ENCODE measurements at regions of chr2 and their contacts with region 1.

Region 1: DNA sequence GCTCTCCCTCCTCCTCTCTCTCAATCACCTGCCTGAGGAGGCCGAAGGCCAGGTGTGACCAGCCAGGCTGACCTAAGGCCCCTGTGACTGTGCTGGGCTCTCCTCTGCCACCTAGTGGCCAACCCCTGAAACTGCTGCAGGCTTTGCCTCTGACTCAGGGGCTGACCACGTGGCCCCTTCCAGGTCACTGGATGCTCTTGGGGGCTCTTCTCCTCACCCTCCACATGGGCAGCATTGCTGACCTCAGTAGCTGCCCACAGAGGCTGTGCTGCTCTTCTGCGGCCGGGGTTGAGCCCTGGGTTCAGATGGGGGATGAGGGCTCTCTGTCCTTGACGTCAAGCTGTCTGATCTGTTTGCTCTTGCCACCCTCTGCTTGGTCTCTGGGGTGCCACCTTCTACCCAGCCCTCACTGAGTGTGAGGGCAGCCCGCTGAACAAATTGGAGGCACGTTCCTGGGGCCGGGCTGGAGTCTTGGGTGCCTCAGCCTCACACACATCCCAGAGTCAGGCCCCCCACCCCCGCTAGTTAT is 122.7 kb downstream of the TWIST2 start:
- DNase-seq: peak; percentile 74
- ATAC-seq: peak; percentile 54
- H3K4me3 ChIP-seq: no peak overlapping the region
- H3K27ac ChIP-seq: no peak overlapping the region
- H3K4me1 ChIP-seq: peaks cover 24% of the 10 kb centered on the region
- H3K27me3 ChIP-seq: no peaks in the 10 kb centered on the region
- CTCF ChIP-seq: peak; percentile 95

Region 2: GRCh38 chr2:237627441-237628246 is 1343.0 kb before region 1 on chr2 and contains the start of gene LRRFIP1:
- CTCF ChIA-PET with region 1: no interaction called
- POLR2A ChIA-PET with region 1: no interaction called
- intact Hi-C with region 1: no loop called
- DNase-seq: peak; percentile 31
- ATAC-seq: peak; percentile 82
- H3K4me3 ChIP-seq: peak within 1 kb of the TSS; percentile 84
- H3K27ac ChIP-seq: no peak within 1 kb of the TSS
- H3K4me1 ChIP-seq: peaks cover 10% of the 10 kb centered on the region; the same call in 1 of the 2 replicates
- H3K27me3 ChIP-seq: peaks cover 4% of the 10 kb centered on the region; the same call in 1 of the 2 replicates
- CTCF ChIP-seq: no peak
- total RNA-seq, gene LRRFIP1: 87.8 and 106 TPM in 2 replicates

Region 3: GRCh38 chr2:238720232-238720672 is 250.4 kb before region 1 on chr2:
- CTCF ChIA-PET with region 1: no interaction called
- POLR2A ChIA-PET with region 1: no interaction called
- intact Hi-C with region 1: loop called (anchors 10 kb)
- DNase-seq: peak; percentile 71
- ATAC-seq: peak; percentile 76
- H3K4me3 ChIP-seq: no peak overlapping the region
- H3K27ac ChIP-seq: no peak overlapping the region
- H3K4me1 ChIP-seq: no peaks in the 10 kb centered on the region
- H3K27me3 ChIP-seq: no peaks in the 10 kb centered on the region
- CTCF ChIP-seq: peak; percentile 82

Region 4: GRCh38 chr2:238895891-238896600 is 74.6 kb before region 1 on chr2:
- CTCF ChIA-PET with region 1: no interaction called
- POLR2A ChIA-PET with region 1: no interaction called
- intact Hi-C with region 1: no loop called
- DNase-seq: no peak
- ATAC-seq: no peak
- H3K4me3 ChIP-seq: no peak overlapping the region
- H3K27ac ChIP-seq: no peak overlapping the region
- H3K4me1 ChIP-seq: no peaks in the 10 kb centered on the region
- H3K27me3 ChIP-seq: no peaks in the 10 kb centered on the region
- CTCF ChIP-seq: no peak

Region 5: GRCh38 chr2:238945433-238946150 is 25.0 kb before region 1 on chr2:
- CTCF ChIA-PET with region 1: interaction called, 6 read pairs
- POLR2A ChIA-PET with region 1: interaction called, 3 read pairs
- intact Hi-C with region 1: loop called (anchors 1 kb)
- DNase-seq: peak; percentile 45
- ATAC-seq: no peak
- H3K4me3 ChIP-seq: no peak overlapping the region
- H3K27ac ChIP-seq: no peak overlapping the region
- H3K4me1 ChIP-seq: peaks cover 50% of the 10 kb centered on the region
- H3K27me3 ChIP-seq: no peaks in the 10 kb centered on the region
- CTCF ChIP-seq: peak; percentile 61

Region 6: GRCh38 chr2:239006622-239007300 is 36.1 kb after region 1 on chr2:
- CTCF ChIA-PET with region 1: interaction called, 5 read pairs
- POLR2A ChIA-PET with region 1: no interaction called
- intact Hi-C with region 1: loop called (anchors 2 kb)
- DNase-seq: peak; percentile 94
- ATAC-seq: peak; percentile 95
- H3K4me3 ChIP-seq: no peak overlapping the region
- H3K27ac ChIP-seq: peak overlapping the region; percentile 25
- H3K4me1 ChIP-seq: peaks cover 42% of the 10 kb centered on the region
- H3K27me3 ChIP-seq: no peaks in the 10 kb centered on the region
- CTCF ChIP-seq: no peak

Region 7: GRCh38 chr2:239106314-239106908 is 135.8 kb after region 1 on chr2:
- CTCF ChIA-PET with region 1: no interaction called
- POLR2A ChIA-PET with region 1: interaction called, 5 read pairs
- intact Hi-C with region 1: loop called (anchors 5 kb)
- DNase-seq: peak; percentile 80
- ATAC-seq: peak; percentile 96
- H3K4me3 ChIP-seq: no peak overlapping the region
- H3K27ac ChIP-seq: no peak overlapping the region
- H3K4me1 ChIP-seq: no peaks in the 10 kb centered on the region
- H3K27me3 ChIP-seq: no peaks in the 10 kb centered on the region
- CTCF ChIP-seq: peak; percentile 79

Measured in PC-3 (cell line).